ENCODE measurements at regions of chr16 and their contacts with region 1.

Region 1: GRCh38 chr16:24580665-24581064 is 41.3 kb downstream of the RBBP6 start:
- DNase-seq: peak; percentile 53
- ATAC-seq: peak; percentile 11; the same call in 1 of the 2 replicates
- H3K4me3 ChIP-seq: no peak overlapping the region; the same call in 1 of the 2 replicates
- H3K27ac ChIP-seq: no peak overlapping the region
- H3K4me1 ChIP-seq: peaks cover 3% of the 10 kb centered on the region
- H3K27me3 ChIP-seq: no peaks in the 10 kb centered on the region
- CTCF ChIP-seq: peak; percentile 64

Region 2: GRCh38 chr16:24609740-24610415 is 29.2 kb after region 1 on chr16:
- CTCF ChIA-PET with region 1: no interaction called
- POLR2A ChIA-PET with region 1: no interaction called
- intact Hi-C with region 1: no loop called
- DNase-seq: no peak
- ATAC-seq: peak; percentile 18; the same call in 1 of the 2 replicates
- H3K4me3 ChIP-seq: peak overlapping the region; percentile 50
- H3K27ac ChIP-seq: no peak overlapping the region
- H3K4me1 ChIP-seq: no peaks in the 10 kb centered on the region
- H3K27me3 ChIP-seq: no peaks in the 10 kb centered on the region
- CTCF ChIP-seq: no peak

Region 3: DNA sequence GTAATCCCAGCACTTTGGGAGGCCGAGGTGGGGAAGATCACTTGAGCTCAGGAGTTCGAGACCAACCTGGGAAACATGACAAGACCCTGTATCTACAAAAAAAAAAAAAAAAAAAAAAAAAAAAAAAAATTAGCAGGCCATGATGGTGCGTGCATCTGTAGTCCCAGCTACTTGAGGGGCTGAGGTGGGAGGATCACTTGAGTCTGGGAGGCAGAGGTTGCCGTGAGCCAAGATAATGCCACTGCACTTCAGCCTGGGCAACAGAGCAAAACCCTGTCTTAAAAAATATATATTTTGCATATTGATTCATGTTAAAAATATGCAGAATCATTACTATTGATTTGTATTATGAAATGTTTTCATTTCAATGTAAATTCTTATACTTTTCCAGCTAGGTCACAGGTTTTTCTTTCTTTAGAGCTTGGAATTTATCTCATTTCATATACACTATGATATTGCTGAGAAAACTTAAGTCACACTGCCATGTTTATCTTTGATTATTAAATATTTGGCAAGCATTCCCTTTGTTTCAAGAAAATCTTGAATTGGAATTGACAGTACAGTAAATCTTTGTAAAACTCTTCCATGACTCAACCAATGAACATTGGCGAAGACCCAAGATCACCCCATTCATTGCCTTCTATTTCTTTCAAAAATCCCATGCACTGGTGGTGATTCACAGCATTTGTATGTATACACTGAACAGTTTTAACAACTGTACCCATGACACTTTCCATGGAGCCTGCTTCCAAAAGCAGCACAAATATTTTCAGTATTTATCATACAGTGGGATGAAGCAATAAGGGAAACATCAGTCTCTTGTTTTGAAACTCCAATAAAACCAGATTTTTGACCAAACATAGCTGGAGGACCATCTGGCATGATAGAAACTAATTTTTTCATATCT is 65.3 kb after region 1 on chr16:
- CTCF ChIA-PET with region 1: no interaction called
- POLR2A ChIA-PET with region 1: no interaction called
- intact Hi-C with region 1: loop called (anchors 1 kb)
- DNase-seq: peak; percentile 98
- ATAC-seq: peak; percentile 98
- H3K4me3 ChIP-seq: no peak overlapping the region
- H3K27ac ChIP-seq: peak overlapping the region; percentile 93
- H3K4me1 ChIP-seq: peaks cover 23% of the 10 kb centered on the region
- H3K27me3 ChIP-seq: no peaks in the 10 kb centered on the region
- CTCF ChIP-seq: no peak

Region 4: GRCh38 chr16:24668481-24669061 is 87.9 kb after region 1 on chr16:
- CTCF ChIA-PET with region 1: interaction called, 5 read pairs
- POLR2A ChIA-PET with region 1: no interaction called
- intact Hi-C with region 1: loop called (anchors 5 kb)
- DNase-seq: no peak
- ATAC-seq: no peak
- H3K4me3 ChIP-seq: no peak overlapping the region
- H3K27ac ChIP-seq: peak overlapping the region; percentile 69
- H3K4me1 ChIP-seq: peaks cover 7% of the 10 kb centered on the region
- H3K27me3 ChIP-seq: no peaks in the 10 kb centered on the region
- CTCF ChIP-seq: no peak

Region 5: GRCh38 chr16:24694931-24695330 is 114.3 kb after region 1 on chr16:
- CTCF ChIA-PET with region 1: no interaction called
- POLR2A ChIA-PET with region 1: no interaction called
- intact Hi-C with region 1: loop called (anchors 5 kb)
- DNase-seq: no peak
- ATAC-seq: no peak
- H3K4me3 ChIP-seq: no peak overlapping the region
- H3K27ac ChIP-seq: no peak overlapping the region
- H3K4me1 ChIP-seq: no peaks in the 10 kb centered on the region
- H3K27me3 ChIP-seq: no peaks in the 10 kb centered on the region
- CTCF ChIP-seq: no peak

Region 6: GRCh38 chr16:24729362-24729984 is 148.8 kb after region 1 on chr16 and contains the start of gene TNRC6A:
- CTCF ChIA-PET with region 1: no interaction called
- POLR2A ChIA-PET with region 1: no interaction called
- intact Hi-C with region 1: loop called (anchors 10 kb)
- DNase-seq: peak; percentile 74
- ATAC-seq: peak; percentile 87
- H3K4me3 ChIP-seq: peak within 1 kb of the TSS; percentile 75
- H3K27ac ChIP-seq: peak within 1 kb of the TSS; percentile 71
- H3K4me1 ChIP-seq: peaks cover 15% of the 10 kb centered on the region
- H3K27me3 ChIP-seq: no peaks in the 10 kb centered on the region
- CTCF ChIP-seq: no peak
- total RNA-seq, gene TNRC6A: 16.2 and 20.3 TPM in 2 replicates

Region 7: DNA sequence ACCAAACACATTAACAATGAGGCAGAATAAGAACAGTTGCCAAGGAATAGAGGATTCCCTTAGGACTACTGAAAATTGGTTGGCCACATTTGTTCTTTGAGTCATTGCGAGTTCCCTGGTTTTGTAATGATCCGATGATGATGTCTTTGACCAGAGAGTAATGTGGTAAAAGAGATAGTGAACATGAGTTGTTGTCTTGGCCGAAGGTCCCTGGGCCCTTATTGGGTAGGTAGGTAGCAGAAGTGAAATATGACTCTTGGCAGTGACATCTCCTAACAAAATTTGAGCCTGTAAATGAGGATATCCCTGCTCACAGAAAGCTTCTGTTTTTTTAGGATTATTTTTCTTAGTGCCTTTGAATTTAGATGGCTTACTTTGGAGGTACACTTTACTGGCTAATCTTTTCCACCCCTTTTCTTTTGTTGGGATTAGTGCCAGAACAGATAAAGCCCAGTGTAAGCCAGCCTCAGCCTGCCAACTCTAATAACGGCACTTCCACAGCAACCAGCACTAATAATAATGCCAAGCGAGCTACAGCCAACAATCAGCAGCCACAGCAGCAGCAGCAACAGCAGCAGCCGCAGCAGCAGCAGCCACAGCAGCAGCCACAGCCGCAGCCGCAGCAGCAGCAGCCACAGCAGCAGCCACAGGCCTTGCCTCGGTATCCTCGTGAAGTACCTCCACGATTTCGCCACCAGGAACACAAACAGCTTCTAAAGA is 196.0 kb after region 1 on chr16:
- CTCF ChIA-PET with region 1: no interaction called
- POLR2A ChIA-PET with region 1: no interaction called
- intact Hi-C with region 1: loop called (anchors 10 kb)
- DNase-seq: no peak
- ATAC-seq: no peak
- H3K4me3 ChIP-seq: no peak overlapping the region
- H3K27ac ChIP-seq: no peak overlapping the region
- H3K4me1 ChIP-seq: peaks cover 8% of the 10 kb centered on the region
- H3K27me3 ChIP-seq: no peaks in the 10 kb centered on the region
- CTCF ChIP-seq: no peak

Region 8: DNA sequence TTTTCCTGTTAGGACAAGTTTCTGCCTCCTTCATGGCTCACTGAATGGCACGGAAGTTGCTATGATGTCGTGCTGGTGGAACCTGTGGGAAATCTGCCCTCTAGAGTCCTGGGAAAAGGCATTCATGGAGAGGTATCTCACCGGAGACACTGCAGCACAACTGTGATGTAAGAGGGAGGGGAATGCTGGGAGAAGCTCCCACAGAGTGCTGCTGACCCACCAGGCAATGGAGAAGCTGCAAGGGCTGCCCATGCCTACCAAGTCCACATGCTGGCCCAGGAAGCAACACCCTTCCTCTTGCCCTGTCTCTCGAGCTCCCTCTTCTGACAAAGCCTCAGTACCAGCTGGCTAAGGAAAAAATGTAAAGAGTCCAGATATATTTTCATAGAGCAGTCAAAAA is 219.9 kb after region 1 on chr16:
- CTCF ChIA-PET with region 1: no interaction called
- POLR2A ChIA-PET with region 1: no interaction called
- intact Hi-C with region 1: loop called (anchors 5 kb)
- DNase-seq: peak; percentile 13
- ATAC-seq: no peak
- H3K4me3 ChIP-seq: no peak overlapping the region
- H3K27ac ChIP-seq: no peak overlapping the region
- H3K4me1 ChIP-seq: no peaks in the 10 kb centered on the region
- H3K27me3 ChIP-seq: no peaks in the 10 kb centered on the region
- CTCF ChIP-seq: peak; percentile 45